Gastrocnemius medialis (tissue), 4 donors: ENCODE measurements at regions of chr17 and their contacts with region 1.

Region 1: DNA sequence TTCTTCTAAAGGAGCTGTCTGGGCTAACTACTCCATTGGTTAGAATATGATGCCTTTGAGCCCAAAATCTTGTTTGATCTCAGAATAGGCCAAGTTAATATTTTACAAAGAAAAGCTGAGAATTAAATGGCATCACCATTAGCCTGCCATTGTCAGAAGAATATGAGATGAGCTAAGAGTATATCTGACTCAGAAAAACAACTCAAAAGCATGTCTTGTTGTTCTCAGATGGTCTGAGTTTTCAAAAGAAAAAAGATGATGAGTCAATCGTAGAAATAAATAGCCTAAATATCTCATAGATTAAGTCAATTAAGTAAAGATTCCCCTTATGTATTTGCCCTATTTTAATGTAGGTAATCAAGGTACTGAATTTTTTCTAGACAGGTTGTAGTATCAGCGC is 197.1 kb upstream of the TBX2 start:
- DNase-seq: no peak
- ATAC-seq: no peak
- H3K4me3 ChIP-seq: no peak overlapping the region
- H3K27ac ChIP-seq: no peak overlapping the region
- H3K4me1 ChIP-seq: peaks cover 0 to 5% of the 10 kb centered on the region in 2 donors
- H3K27me3 ChIP-seq: no peaks in the 10 kb centered on the region
- CTCF ChIP-seq: no peak
- POLR2A ChIP-seq: no peak

Region 2: GRCh38 chr17:61097781-61098180 is 104.8 kb before region 1 on chr17:
- in situ Hi-C with region 1: no loop called
- intact Hi-C with region 1: no loop called
- DNase-seq: no peak
- ATAC-seq: no peak
- H3K4me3 ChIP-seq: no peak overlapping the region
- H3K27ac ChIP-seq: no peak overlapping the region
- H3K4me1 ChIP-seq: peaks cover 0 to 9% of the 10 kb centered on the region in 2 donors
- H3K27me3 ChIP-seq: no peaks in the 10 kb centered on the region
- CTCF ChIP-seq: no peak
- POLR2A ChIP-seq: no peak

Region 3: GRCh38 chr17:61221597-61222460 is 19.3 kb after region 1 on chr17:
- in situ Hi-C with region 1: no loop called
- intact Hi-C with region 1: loop called (anchors 2 kb)
- DNase-seq: no peak
- ATAC-seq: no peak
- H3K4me3 ChIP-seq: no peak overlapping the region
- H3K27ac ChIP-seq: no peak overlapping the region
- H3K4me1 ChIP-seq: peaks cover 7 to 12% of the 10 kb centered on the region in 2 donors
- H3K27me3 ChIP-seq: no peaks in the 10 kb centered on the region
- CTCF ChIP-seq: no peak
- POLR2A ChIP-seq: no peak

Region 4: DNA sequence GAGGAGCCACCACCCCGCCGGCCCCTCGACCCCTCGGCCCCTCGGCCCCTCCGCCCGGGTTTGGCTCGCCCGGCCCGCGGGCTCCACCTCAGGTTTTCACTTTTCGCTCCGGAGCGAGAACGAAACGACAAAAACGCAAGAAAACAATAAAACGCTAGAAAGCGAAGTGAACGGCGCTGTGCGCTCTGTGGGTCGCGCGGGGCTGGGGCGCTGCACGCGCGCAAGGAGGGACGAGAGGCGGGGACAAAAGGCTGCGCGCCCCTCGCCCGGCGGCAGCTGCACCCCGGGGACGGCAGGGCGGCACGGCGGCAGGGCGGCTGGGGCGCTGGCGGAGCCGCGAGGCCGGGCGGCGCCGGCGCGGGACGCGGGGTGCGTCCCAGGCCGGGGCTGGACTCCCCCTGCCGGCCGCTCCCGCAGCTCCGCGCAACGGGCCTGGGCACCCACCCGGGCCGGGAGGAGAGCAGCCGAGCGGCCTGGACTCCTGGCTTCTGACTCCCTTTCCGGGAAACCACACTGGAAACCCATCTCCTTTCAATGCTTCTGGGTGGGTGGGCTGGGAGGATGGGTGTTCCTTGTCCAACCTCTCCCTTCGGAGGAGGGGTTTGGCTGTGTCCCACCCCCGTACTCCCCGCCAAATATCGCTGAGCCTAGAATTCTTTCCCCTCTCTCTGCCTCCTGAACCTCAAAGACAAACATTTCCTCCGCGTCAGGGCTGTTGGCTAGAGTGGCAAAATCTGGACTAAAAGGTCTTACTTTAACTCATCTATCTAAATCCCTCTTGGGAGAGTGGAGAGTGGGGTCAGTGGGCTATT is 206.9 kb after region 1 on chr17:
- in situ Hi-C with region 1: no loop called
- intact Hi-C with region 1: no loop called
- DNase-seq: peak in 1 of 2 donors; percentile 28
- ATAC-seq: peak; percentile 21 to 32
- H3K4me3 ChIP-seq: peak overlapping the region; percentile 57 to 75 (median 64)
- H3K27ac ChIP-seq: peak overlapping the region in 3 of 4 donors; percentile 63 to 76 (median 71)
- H3K4me1 ChIP-seq: peaks cover 5 to 27% of the 10 kb centered on the region in 2 donors
- H3K27me3 ChIP-seq: peaks cover 24 to 39% (median 37%) of the 10 kb centered on the region in 3 donors
- CTCF ChIP-seq: peak; percentile 36 to 58 (median 47)
- POLR2A ChIP-seq: no peak